ENCODE measurements at regions of chr6 and their contacts with region 1.

Region 1: GRCh38 chr6:73653571-73654424 is at the start of gene SLC17A5:
- DNase-seq: peak; percentile 86
- ATAC-seq: peak; percentile 84
- H3K4me3 ChIP-seq: peak within 1 kb of the TSS; percentile 68 to 76
- H3K27ac ChIP-seq: peak within 1 kb of the TSS; percentile 93
- H3K4me1 ChIP-seq: peaks cover 50 to 74% of the 10 kb centered on the region in 2 experiments
- H3K27me3 ChIP-seq: no peaks in the 10 kb centered on the region
- CTCF ChIP-seq: no peak
- POLR2A ChIP-seq: peak; percentile 41
- RAD21 ChIP-seq: no peak
- total RNA-seq, gene SLC17A5: 17.0 TPM

Region 2: DNA sequence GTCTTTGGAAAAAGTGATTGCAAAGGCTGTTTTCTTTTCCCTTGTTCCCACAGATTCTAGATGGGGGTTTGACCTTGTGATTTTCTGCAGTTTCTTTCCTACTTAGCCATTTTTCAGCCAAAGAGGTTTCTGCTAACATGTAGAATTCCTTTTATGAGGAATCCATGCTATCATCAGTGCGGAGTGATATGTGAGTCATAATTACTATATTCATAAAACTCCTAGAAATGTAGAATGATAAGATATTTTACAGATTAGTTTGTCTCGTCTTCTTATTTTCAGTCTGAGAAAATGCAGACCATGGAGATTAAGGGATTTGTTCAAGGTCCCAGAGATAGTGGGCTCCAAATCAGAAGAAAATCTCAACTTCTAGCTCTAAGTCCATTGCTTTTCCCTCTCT is 933.3 kb before region 1 on chr6:
- CTCF ChIA-PET with region 1: no interaction called
- POLR2A ChIA-PET with region 1: no interaction called
- RAD21 ChIA-PET with region 1: no interaction called
- intact Hi-C with region 1: no loop called
- DNase-seq: no peak
- ATAC-seq: no peak
- H3K4me3 ChIP-seq: no peak overlapping the region
- H3K27ac ChIP-seq: no peak overlapping the region
- H3K4me1 ChIP-seq: no peaks in the 10 kb centered on the region
- H3K27me3 ChIP-seq: peaks cover 15% of the 10 kb centered on the region
- CTCF ChIP-seq: no peak
- POLR2A ChIP-seq: no peak
- RAD21 ChIP-seq: no peak

Region 3: GRCh38 chr6:73285674-73286283 is 368.0 kb before region 1 on chr6:
- CTCF ChIA-PET with region 1: interaction called, 3 read pairs
- POLR2A ChIA-PET with region 1: interaction called, 3 read pairs
- RAD21 ChIA-PET with region 1: no interaction called
- intact Hi-C with region 1: loop called (anchors 10 kb)
- DNase-seq: peak; percentile 23
- ATAC-seq: peak; percentile 84
- H3K4me3 ChIP-seq: no peak overlapping the region
- H3K27ac ChIP-seq: no peak overlapping the region
- H3K4me1 ChIP-seq: peaks cover 0 to 6% of the 10 kb centered on the region in 2 experiments; a peak in 1 of 4 replicates
- H3K27me3 ChIP-seq: no peaks in the 10 kb centered on the region
- CTCF ChIP-seq: peak; percentile 41 to 56 (median 46); a peak in 5 of 6 replicates
- POLR2A ChIP-seq: no peak
- RAD21 ChIP-seq: peak; percentile 58

Region 4: GRCh38 chr6:73515204-73515655 is 138.6 kb before region 1 on chr6:
- CTCF ChIA-PET with region 1: interaction called, 4 read pairs
- POLR2A ChIA-PET with region 1: interaction called, 33 read pairs
- RAD21 ChIA-PET with region 1: no interaction called
- intact Hi-C with region 1: no loop called
- DNase-seq: no peak
- ATAC-seq: peak; percentile 7
- H3K4me3 ChIP-seq: no peak overlapping the region
- H3K27ac ChIP-seq: peak overlapping the region; percentile 50; the same call in 1 of the 2 replicates
- H3K4me1 ChIP-seq: peaks cover 6 to 46% of the 10 kb centered on the region in 2 experiments; a peak in 3 of 4 replicates
- H3K27me3 ChIP-seq: no peaks in the 10 kb centered on the region
- CTCF ChIP-seq: no peak
- POLR2A ChIP-seq: no peak
- RAD21 ChIP-seq: no peak

Region 5: DNA sequence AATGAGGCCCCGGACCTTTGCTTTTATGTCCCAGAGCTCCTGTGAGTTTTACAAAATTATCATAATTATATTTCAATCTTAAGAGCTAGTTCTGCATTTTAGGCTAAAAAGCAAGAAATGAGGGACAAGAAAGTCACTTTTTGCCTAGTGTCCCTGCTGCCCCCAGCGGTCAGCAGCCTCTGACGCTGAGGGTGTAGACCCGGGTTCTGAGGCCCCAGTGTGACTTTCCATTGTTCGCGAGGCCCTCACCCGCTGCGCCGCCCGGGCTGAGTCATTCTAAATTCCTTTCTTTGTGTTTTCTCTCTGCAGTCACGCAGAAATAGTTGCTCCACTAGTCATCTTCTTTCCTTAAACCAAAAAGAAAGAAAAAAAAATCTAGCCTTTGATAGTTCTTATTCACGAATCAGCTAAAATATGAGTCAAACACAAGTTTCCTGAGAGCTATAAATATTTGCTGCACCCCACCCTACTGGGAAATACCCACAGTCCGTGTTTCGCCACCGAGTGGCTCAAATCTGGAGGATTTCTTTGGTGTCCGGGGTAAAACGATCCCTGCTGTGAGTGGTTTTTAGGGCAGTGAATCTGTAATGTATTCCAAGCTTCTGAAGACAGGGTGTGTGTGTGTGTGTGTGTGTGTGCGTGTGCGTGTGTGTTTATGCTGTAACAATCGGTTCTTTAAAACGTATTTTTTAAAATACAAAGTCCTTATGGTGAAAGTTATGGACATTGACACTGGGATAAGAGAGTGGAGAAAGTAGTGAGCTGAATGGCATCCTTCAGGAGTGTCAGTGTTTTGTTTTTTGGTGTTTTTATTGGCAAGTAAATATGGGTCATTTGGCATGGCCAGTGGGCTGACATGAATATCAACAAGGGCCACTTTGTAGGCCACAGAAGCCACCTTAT is 73.3 kb before region 1 on chr6:
- CTCF ChIA-PET with region 1: interaction called, 4 read pairs
- POLR2A ChIA-PET with region 1: interaction called, 6 read pairs
- RAD21 ChIA-PET with region 1: no interaction called
- intact Hi-C with region 1: loop called (anchors 5 kb)
- DNase-seq: peak; percentile 96
- ATAC-seq: peak; percentile 82
- H3K4me3 ChIP-seq: peak overlapping the region; percentile 37 to 52
- H3K27ac ChIP-seq: peak overlapping the region; percentile 97
- H3K4me1 ChIP-seq: peaks cover 59% of the 10 kb centered on the region in 2 experiments
- H3K27me3 ChIP-seq: no peaks in the 10 kb centered on the region
- CTCF ChIP-seq: peak in 2 of 3 experiments; percentile 62 to 67; a peak in 4 of 6 replicates
- POLR2A ChIP-seq: peak; percentile 45
- RAD21 ChIP-seq: peak; percentile 52; the same call in 1 of the 2 replicates

Region 6: DNA sequence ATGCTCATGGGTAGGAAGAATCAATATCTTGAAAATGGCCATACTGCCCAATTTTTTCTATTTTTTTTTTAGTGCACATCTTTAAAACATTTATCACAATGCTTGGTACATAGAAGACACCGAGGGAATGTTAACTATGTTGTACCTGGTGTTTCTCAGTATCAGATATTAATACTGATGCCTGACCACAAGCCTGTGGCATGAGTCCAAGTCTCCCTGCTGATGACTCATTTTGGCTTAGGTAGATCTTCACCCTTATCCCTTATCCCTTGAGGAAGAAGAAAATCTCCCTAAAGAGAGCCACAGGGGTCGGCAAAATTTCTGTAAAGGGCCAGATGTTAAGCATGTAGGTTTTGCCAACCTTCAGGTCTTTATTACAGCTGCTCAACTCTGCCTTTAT is 56.7 kb after region 1 on chr6:
- CTCF ChIA-PET with region 1: no interaction called
- POLR2A ChIA-PET with region 1: no interaction called
- RAD21 ChIA-PET with region 1: no interaction called
- intact Hi-C with region 1: loop called (anchors 5 kb)
- DNase-seq: peak; percentile 82
- ATAC-seq: peak; percentile 71
- H3K4me3 ChIP-seq: peak overlapping the region in 1 of 2 experiments; percentile 32; a peak in 2 of 4 replicates
- H3K27ac ChIP-seq: peak overlapping the region; percentile 67
- H3K4me1 ChIP-seq: peaks cover 54 to 68% of the 10 kb centered on the region in 2 experiments
- H3K27me3 ChIP-seq: no peaks in the 10 kb centered on the region
- CTCF ChIP-seq: no peak
- POLR2A ChIP-seq: no peak
- RAD21 ChIP-seq: 0 out of 2 replicates have a peak, but pooled peaks have one; percentile 2

Measured in HCT116 (cell line).